Endothelial cell of umbilical vein (primary cell): ENCODE measurements at regions of chr3 and their contacts with region 1.

Region 1: GRCh38 chr3:194472290-194472920 is 14.4 kb downstream of the ATP13A3 start:
- DNase-seq: peak; percentile 67
- H3K4me3 ChIP-seq: no peak overlapping the region
- H3K27ac ChIP-seq: no peak overlapping the region
- H3K4me1 ChIP-seq: peaks cover 3% of the 10 kb centered on the region
- H3K27me3 ChIP-seq: no peaks in the 10 kb centered on the region
- CTCF ChIP-seq: peak; percentile 80 to 85
- POLR2A ChIP-seq: no peak

Region 2: DNA sequence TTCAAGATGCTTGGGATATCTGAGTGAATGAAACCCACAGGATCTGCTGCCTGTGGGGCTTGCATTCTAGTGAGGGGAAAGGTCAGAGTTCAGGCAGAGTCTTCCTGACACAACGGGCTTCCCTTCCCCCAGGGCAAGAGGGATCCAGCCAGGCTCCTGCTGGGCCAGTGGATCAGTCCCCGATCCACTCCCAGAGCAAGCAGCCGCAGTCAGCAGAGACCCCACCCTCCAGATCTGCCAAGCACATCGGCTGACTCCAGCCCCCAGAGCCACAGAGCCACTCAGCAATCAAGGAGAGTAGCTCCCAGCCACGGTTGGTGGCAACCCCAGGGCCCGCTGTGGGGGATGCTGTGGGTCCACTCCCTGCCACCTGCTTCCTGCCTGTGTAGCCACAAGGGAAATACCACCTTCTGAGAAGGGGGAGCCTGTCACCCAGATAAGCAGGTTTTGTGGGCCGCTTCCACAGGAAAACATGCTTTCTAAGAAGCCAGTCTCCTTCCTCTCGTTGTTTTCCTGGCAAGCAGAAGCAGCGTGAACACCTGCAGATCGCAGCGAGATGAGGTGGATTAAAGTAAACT is 166.2 kb before region 1 on chr3:
- CTCF ChIA-PET with region 1: no interaction called
- POLR2A ChIA-PET with region 1: no interaction called
- dilution Hi-C with region 1: no loop called
- intact Hi-C with region 1: no loop called
- DNase-seq: peak; percentile 89
- H3K4me3 ChIP-seq: no peak overlapping the region
- H3K27ac ChIP-seq: no peak overlapping the region
- H3K4me1 ChIP-seq: peaks cover 14% of the 10 kb centered on the region
- H3K27me3 ChIP-seq: peaks cover 2% of the 10 kb centered on the region in 2 experiments
- CTCF ChIP-seq: no peak
- POLR2A ChIP-seq: no peak

Region 3: DNA sequence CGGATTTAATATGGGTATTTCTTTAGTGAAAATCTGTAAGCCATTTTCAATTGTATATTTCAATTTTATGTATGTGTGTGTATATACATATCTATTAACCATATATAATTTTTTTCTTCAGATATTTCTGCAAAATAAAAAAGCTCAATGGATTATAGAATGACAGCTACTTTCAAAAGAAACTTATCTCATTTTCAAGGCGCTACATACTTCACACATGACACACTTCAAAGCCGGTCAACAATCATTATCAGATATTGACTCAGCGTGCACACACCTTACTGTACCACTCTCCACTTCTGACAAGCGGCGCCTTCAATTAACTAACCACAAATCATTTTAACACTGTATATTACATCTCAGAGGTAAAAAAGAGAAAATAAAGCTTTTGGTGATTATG is 25.2 kb before region 1 on chr3:
- CTCF ChIA-PET with region 1: interaction called, 12 read pairs
- POLR2A ChIA-PET with region 1: no interaction called
- dilution Hi-C with region 1: no loop called
- intact Hi-C with region 1: no loop called
- DNase-seq: no peak
- H3K4me3 ChIP-seq: no peak overlapping the region
- H3K27ac ChIP-seq: no peak overlapping the region
- H3K4me1 ChIP-seq: no peaks in the 10 kb centered on the region
- H3K27me3 ChIP-seq: no peaks in the 10 kb centered on the region
- CTCF ChIP-seq: no peak
- POLR2A ChIP-seq: no peak

Region 4: DNA sequence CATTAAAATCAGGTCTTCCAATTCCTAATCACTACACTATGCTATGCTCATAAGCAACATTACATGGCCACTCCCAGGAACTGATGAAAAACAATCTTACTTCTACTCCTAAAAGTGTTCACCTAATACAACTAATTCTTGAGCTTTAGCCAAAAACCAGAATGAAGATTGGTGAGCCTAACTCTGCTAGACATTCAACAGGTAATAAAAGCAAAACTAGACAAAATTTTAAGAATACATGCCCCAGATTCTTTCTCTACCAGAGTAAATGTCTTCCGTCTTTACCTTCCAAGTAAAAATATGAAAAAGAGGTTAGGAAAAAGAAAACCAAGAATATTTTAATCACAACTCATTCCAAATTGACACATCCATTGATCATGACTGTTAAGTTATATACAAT is 16.9 kb before region 1 on chr3:
- CTCF ChIA-PET with region 1: interaction called, 12 read pairs
- POLR2A ChIA-PET with region 1: no interaction called
- dilution Hi-C with region 1: no loop called
- intact Hi-C with region 1: no loop called
- DNase-seq: no peak
- H3K4me3 ChIP-seq: no peak overlapping the region
- H3K27ac ChIP-seq: no peak overlapping the region
- H3K4me1 ChIP-seq: no peaks in the 10 kb centered on the region
- H3K27me3 ChIP-seq: no peaks in the 10 kb centered on the region
- CTCF ChIP-seq: no peak
- POLR2A ChIP-seq: no peak

Region 5: GRCh38 chr3:194486540-194487288 is 14.3 kb after region 1 on chr3 and contains the start of gene ATP13A3:
- CTCF ChIA-PET with region 1: interaction called, 26 read pairs
- POLR2A ChIA-PET with region 1: no interaction called
- dilution Hi-C with region 1: no loop called
- intact Hi-C with region 1: no loop called
- DNase-seq: peak; percentile 87
- H3K4me3 ChIP-seq: peak within 1 kb of the TSS; percentile 14 to 81 (median 72)
- H3K27ac ChIP-seq: peak within 1 kb of the TSS; percentile 62
- H3K4me1 ChIP-seq: peaks cover 28% of the 10 kb centered on the region
- H3K27me3 ChIP-seq: no peaks in the 10 kb centered on the region
- CTCF ChIP-seq: no peak
- POLR2A ChIP-seq: peak; percentile 81
- total RNA-seq, gene ATP13A3: 56.8 and 59.0 TPM in 2 replicates

Region 6: GRCh38 chr3:194573691-194574437 is 101.5 kb after region 1 on chr3:
- CTCF ChIA-PET with region 1: interaction called, 166 read pairs
- POLR2A ChIA-PET with region 1: interaction called, 3 read pairs
- dilution Hi-C with region 1: no loop called
- intact Hi-C with region 1: loop called (anchors 1 kb)
- DNase-seq: peak; percentile 54
- H3K4me3 ChIP-seq: no peak overlapping the region
- H3K27ac ChIP-seq: no peak overlapping the region
- H3K4me1 ChIP-seq: peaks cover 20% of the 10 kb centered on the region
- H3K27me3 ChIP-seq: no peaks in the 10 kb centered on the region
- CTCF ChIP-seq: peak; percentile 55 to 76
- POLR2A ChIP-seq: no peak

Region 7: DNA sequence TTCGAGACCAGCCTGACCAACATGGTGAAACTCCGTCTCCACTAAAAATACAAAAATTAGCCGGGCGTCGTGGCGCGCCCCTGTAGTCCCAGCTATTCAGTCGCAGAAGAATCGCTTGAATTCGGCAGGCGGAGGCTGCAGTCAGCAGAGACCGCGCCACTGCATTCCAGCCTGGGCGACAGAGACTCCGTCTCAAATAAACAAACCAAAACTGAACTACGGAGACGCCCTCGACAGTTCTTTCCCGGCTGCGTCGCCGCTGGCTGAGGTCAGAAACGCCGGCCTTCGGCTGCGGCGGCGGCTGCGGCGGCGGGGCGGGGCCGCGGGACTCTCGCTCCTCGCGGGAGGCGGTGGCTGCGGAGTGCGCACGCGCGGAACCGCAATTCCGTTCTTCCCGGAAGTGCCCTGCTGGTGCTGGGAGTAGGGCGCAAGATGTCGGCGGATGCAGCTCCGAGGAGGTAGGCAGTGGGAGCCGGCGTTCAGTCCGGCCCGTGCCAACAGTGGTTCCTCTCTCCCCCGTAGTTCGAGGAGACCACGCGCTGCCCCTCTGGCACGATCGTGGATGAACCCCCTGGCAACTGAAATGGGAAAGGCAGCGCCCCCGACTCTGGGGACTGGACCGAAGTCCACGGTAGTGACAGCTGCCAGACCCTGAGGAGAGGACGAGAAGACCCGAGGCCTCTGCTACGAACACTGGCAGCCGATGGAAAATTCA is 111.4 kb after region 1 on chr3:
- CTCF ChIA-PET with region 1: interaction called, 166 read pairs
- POLR2A ChIA-PET with region 1: interaction called, 3 read pairs
- dilution Hi-C with region 1: no loop called
- intact Hi-C with region 1: no loop called
- DNase-seq: peak; percentile 95
- H3K4me3 ChIP-seq: peak overlapping the region; percentile 27 to 91 (median 61)
- H3K27ac ChIP-seq: peak overlapping the region; percentile 80
- H3K4me1 ChIP-seq: peaks cover 49% of the 10 kb centered on the region
- H3K27me3 ChIP-seq: no peaks in the 10 kb centered on the region
- CTCF ChIP-seq: no peak
- POLR2A ChIP-seq: peak; percentile 94